AG04449 (cell line): ENCODE measurements at regions of chr17 and their contacts with region 1.

Region 1: DNA sequence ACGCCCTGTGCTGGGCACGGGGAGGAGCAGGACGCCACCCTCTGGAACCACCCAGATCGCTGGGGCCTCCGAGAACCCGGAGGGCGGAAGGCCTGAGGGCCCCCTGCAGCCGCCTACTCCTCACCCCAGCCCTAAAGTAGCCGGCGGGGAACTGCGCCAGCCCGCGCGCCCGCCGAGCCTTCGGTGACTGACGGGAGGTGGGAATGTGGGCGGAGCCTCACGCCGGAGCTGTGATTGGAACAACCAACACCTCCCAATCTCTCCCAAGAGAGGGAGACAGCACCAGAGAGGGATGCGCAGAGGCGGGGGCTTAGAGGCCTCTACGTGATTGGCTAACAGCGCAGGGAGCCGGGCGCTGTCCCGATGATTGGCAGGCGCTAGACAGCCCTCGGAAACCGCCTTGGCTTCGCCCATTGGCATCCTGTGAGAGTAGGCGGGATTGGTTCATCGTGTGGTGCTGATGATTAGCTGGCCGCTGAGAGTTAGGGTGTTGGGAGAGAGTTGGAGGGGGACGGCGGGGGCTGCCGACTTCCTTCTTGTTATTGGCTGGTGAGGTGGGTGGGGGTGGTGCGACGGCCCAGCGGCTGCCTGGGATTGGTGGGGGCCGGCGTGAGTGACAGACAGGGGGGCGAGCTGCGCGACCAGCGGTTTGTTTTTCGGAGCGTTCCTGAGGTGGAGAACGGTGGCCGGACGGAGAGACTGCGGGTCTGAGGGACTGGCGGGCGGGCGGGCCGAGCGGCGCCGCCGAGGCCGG is at the start of gene MAP3K3:
- DNase-seq: peak; percentile 99
- H3K4me3 ChIP-seq: peak within 1 kb of the TSS; percentile 80
- CTCF ChIP-seq: no peak

Region 2: DNA sequence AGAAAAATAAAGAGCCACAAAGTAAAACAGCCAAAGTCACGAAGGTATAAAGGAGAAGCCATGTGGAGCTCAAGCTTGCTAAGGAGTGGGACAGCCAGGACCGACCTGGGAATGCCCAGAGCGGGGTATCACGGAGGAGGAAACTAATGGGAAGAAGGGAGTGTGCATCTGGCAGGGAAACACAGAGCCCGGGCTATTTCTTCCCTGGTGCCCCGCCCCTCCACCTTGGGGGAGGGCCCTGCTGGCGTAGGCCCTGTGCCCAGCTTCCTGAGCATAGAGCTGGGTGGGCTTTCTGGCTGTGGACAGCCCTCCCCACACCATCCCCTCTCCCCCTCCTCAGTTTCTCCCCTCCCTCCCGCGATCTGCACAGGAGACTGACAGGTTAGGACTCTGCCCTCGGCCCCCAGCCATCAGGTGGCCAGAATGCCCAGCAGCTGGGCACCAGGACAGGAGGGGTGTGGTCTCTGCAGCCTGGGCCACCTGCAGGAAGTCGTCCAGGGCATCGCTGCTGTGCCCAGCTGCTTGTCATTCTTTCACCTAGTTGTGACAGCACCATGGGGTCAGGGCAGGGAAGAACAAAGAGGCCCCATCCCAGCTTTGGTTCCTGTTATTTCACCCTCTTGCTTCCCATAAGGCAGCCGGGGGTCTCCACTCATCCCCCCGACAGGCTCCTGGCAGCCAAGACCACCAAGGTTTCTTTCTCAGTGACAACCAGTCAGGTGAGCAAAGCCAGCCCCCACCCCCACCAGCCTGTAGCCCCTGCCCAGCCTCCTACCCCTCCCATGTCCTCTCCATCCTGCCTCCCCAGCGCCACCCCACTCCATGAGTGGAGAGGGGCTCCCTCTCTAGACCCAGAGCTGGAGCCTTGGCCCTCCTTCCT is 78.8 kb before region 1 on chr17:
- CTCF ChIA-PET with region 1: no interaction called
- POLR2A ChIA-PET with region 1: no interaction called
- DNase-seq: no peak
- H3K4me3 ChIP-seq: no peak overlapping the region
- CTCF ChIP-seq: no peak

Region 3: GRCh38 chr17:63600569-63601438 is 21.1 kb before region 1 on chr17 and contains the start of gene TACO1:
- CTCF ChIA-PET with region 1: interaction called, 24 read pairs
- POLR2A ChIA-PET with region 1: no interaction called
- DNase-seq: peak; percentile 26
- H3K4me3 ChIP-seq: peak within 1 kb of the TSS; percentile 89
- CTCF ChIP-seq: no peak

Region 4: GRCh38 chr17:63672573-63673531 is 50.9 kb after region 1 on chr17:
- CTCF ChIA-PET with region 1: no interaction called
- POLR2A ChIA-PET with region 1: no interaction called
- DNase-seq: no peak
- H3K4me3 ChIP-seq: no peak overlapping the region
- CTCF ChIP-seq: no peak